ENCODE measurements at regions of chr13 and their contacts with region 1.

Region 1: DNA sequence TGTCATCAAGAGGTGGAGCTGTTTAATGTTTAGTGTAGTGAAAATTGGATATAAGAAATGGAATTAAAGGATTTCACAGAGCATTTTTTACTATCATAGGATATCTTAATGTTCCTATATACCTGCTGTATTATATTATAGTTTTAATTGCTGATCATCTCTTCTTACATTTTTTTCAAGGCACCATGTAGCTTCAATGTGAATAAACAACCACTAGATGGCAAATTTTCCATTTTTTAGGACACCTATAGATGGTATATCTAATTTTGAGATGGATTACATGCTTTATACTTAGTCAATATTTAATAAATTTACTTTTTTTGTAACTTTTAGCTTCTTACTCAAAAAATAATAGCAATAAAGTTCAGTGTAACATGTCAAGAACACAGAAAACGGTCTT is 9.0 kb upstream of the ATXN8OS start:
- DNase-seq: no peak
- H3K4me3 ChIP-seq: no peak overlapping the region
- H3K27ac ChIP-seq: no peak overlapping the region
- H3K4me1 ChIP-seq: no peaks in the 10 kb centered on the region
- H3K27me3 ChIP-seq: no peaks in the 10 kb centered on the region
- CTCF ChIP-seq: no peak

Region 2: DNA sequence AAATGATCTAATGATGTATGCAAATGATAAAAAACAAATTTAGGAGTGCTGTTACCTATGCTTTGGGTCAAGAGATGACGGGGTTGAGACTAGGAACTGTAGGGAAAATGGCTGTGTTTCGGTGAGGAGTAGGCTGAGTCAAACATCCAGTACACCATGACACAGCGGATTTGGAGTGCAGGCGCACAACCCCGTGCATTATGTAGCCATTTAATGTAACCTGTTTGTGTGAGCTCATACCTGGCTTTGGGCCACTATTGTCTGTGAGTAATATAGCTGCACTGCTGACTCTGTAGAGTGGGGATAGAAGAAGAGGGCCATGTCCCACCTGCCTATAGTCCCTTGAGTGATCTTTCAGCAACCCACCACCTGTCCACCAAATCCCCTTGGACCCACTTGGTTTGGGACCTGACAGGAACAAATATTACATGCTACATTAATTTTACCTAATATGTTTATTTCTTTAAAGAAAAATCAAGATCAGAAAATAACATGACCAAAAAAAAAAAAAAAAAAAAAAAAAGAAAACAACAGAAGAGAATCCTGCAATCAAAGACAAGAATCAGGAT is 105.1 kb after region 1 on chr13:
- intact Hi-C with region 1: no loop called
- DNase-seq: no peak
- H3K4me3 ChIP-seq: no peak overlapping the region
- H3K27ac ChIP-seq: no peak overlapping the region
- H3K4me1 ChIP-seq: no peaks in the 10 kb centered on the region
- H3K27me3 ChIP-seq: no peaks in the 10 kb centered on the region
- CTCF ChIP-seq: no peak

Region 3: GRCh38 chr13:70568571-70568970 is 469.9 kb after region 1 on chr13:
- intact Hi-C with region 1: loop called (anchors 5 kb)
- DNase-seq: no peak
- H3K4me3 ChIP-seq: no peak overlapping the region
- H3K27ac ChIP-seq: no peak overlapping the region
- H3K4me1 ChIP-seq: no peaks in the 10 kb centered on the region
- H3K27me3 ChIP-seq: no peaks in the 10 kb centered on the region
- CTCF ChIP-seq: peak in 2 of 3 experiments; percentile 39 to 51

Region 4: GRCh38 chr13:70644052-70644451 is 545.4 kb after region 1 on chr13:
- intact Hi-C with region 1: no loop called
- DNase-seq: no peak
- H3K4me3 ChIP-seq: no peak overlapping the region
- H3K27ac ChIP-seq: no peak overlapping the region
- H3K4me1 ChIP-seq: no peaks in the 10 kb centered on the region
- H3K27me3 ChIP-seq: no peaks in the 10 kb centered on the region
- CTCF ChIP-seq: no peak

Measured in ascending aorta (tissue), 2 donors.